ENCODE measurements at regions of chr2 and their contacts with region 1.

Region 1: DNA sequence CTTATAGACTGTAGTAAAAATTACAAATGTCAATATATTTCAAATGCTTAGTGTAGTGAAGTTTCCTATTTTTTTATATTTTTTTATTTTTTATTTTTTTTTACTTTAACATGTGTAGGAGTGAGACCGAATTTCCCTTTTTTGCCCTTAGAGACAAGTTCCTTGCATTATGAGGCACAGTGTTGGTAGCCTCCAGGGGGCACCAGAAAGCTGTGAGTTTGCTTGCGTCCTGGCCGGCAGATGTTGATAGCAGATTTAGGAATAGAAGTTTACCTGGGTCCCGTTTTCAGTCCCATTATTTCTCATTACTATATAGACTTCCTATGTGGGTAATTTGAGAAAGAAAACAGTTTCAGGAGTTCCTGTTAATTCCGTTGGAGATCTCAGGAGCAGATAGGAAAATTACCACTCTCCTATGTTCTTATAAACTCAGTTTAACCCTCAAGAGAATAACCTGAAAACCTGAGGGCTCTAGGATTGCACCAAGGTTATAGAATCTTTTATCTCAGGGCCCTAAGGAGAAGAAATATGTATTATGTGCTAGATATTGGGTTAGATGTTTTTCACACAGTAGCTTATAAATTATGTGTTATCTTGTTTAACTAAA is 157.5 kb upstream of the SESTD1 start:
- DNase-seq: peak in 1 of 2 donors; percentile 78
- ATAC-seq: peak; percentile 72

Region 2: GRCh38 chr2:179479947-179480346 is 57.8 kb after region 1 on chr2:
- intact Hi-C with region 1: no loop called
- DNase-seq: no peak
- ATAC-seq: no peak

Region 3: DNA sequence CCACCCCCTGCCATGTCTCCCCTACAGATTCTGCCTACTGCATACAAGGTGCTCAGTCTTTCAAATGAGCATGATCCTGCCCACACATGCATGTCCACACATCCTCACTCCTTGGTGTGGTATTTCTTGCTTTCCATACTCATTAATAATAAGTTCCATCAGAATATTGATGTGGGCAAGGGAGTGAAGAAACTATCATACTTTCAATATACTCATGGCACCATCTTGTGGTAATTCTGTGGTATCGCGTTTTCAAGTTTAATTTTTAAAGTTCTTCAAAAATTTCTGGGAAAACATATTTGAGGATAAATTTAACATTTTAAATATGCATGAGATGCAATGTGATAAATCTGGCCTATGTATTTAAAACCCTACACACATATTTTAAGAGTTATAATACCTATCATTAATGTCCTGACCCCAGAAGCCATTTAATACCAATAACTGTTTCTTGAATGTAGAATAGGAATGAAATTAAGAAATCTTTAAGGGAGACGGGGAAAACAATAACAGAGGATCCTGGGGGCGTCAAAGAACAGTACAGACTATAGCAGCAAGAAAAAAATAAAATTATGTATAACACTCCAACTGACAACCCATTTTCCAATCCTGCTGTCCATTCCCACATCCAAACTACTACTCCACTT is 329.1 kb after region 1 on chr2:
- intact Hi-C with region 1: loop called in 1 of 2 experiments (anchors 5 kb)
- DNase-seq: no peak
- ATAC-seq: no peak

Region 4: DNA sequence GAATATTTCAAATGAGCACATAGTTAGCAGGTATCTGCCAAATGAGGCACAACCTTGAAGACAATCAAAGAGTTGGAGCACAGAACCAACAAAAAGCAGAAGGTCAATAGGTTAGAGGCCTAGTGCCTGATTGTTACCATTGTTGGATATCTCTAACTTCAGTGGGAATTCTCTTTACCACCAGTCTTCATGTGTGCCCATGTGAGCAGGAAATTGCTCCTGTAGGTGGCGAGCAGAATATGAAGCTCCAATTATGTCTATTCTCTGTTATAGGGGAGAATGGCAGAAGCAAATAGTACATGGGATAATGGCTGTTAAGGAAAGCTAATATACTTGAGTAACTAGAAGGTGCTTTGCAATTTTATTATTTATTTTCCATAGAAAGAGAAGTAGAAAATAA is 454.1 kb after region 1 on chr2:
- intact Hi-C with region 1: no loop called
- DNase-seq: no peak
- ATAC-seq: no peak